Posterior cingulate gyrus (tissue), 11 donors: ENCODE measurements at regions of chr21 and their contacts with region 1.

Region 1: GRCh38 chr21:41068967-41069642 is 98.9 kb upstream of the BACE2 start:
- DNase-seq: peak; percentile 83 to 98 (median 91)

Region 2: GRCh38 chr21:40143822-40144525 is 925.1 kb before region 1 on chr21:
- intact Hi-C with region 1: loop called (anchors 1 kb)
- DNase-seq: peak in 9 of 10 donors; percentile 51 to 94 (median 79)

Region 3: GRCh38 chr21:40466893-40467501 is 602.1 kb before region 1 on chr21:
- intact Hi-C with region 1: loop called (anchors 1 kb)
- DNase-seq: no peak

Region 4: GRCh38 chr21:40846587-40847411 is 222.3 kb before region 1 on chr21 and contains the start of gene DSCAM:
- intact Hi-C with region 1: loop called (anchors 5 kb)
- DNase-seq: peak in 9 of 10 donors; percentile 31 to 93 (median 60)